ENCODE measurements at regions of chr19 and their contacts with region 1.

Region 1: DNA sequence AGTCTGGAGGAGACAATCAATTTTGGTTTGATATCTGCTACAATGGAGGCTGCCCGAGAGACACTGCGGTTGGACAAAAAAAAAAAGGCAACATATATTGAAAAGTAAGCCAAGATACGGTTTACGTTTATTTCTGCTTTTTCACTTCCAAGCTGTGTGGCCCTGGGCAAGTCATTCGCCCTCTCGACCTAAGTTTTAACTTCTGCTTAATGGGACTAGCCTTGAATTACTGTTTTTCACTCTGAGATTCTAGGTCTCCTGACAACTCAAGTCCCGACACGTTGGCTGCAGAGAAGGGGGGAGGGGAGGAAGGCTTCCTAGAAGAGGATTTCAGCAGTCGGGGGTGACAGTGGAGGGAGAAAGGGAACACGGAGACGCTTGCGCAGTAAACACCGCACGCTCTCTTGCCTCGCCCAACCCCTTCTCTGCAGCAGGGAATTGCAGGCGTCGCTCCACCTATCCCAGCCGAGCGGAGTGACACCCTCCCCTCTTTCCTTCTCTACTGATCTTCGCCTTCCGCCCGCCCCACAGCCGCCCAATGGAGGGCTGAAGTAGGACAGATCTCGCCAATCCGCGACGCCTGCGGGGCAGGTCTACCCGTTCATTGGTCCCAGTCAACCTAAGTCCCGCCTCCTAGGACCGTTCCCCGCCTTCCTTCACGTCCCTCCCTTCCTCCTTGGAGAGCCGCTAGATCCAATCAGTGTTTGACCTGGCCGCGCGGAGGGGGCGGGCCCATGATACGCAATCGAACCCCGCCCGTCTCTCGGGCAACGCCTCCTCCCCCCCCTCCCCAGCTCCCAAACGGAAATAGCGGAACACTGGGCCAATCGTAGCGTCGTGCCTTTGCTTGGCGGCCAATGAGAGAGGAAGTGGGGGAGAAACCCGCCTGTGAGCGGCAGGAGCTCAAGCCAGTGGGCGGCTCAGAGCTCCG is 529 bp upstream of the AP2A1 start:
- DNase-seq: peak; percentile 100
- ATAC-seq: peak; percentile 85
- H3K4me3 ChIP-seq: peak overlapping the region; percentile 49 to 78 (median 71)
- H3K4me3 Mint-ChIP-seq: peak overlapping the region; percentile 93
- H3K27ac ChIP-seq: peak overlapping the region; percentile 74 to 76
- H3K27ac Mint-ChIP-seq: peak overlapping the region; percentile 98
- H3K4me1 ChIP-seq: peaks cover 15 to 24% of the 10 kb centered on the region in 2 donors
- H3K4me1 Mint-ChIP-seq: peaks cover 35% of the 10 kb centered on the region
- H3K27me3 ChIP-seq: no peaks in the 10 kb centered on the region
- H3K27me3 Mint-ChIP-seq: no peaks in the 10 kb centered on the region
- CTCF ChIP-seq: no peak

Region 2: GRCh38 chr19:48795055-48795684 is 971.1 kb before region 1 on chr19:
- CTCF ChIA-PET with region 1: no interaction called
- POLR2A ChIA-PET with region 1: no interaction called
- intact Hi-C with region 1: loop called (anchors 2 kb)
- DNase-seq: peak; percentile 93
- ATAC-seq: peak; percentile 98
- H3K4me3 ChIP-seq: peak overlapping the region; percentile 42 to 68 (median 60)
- H3K4me3 Mint-ChIP-seq: peak overlapping the region; percentile 98
- H3K27ac ChIP-seq: peak overlapping the region; percentile 30 to 62
- H3K27ac Mint-ChIP-seq: peak overlapping the region; percentile 93
- H3K4me1 ChIP-seq: peaks cover 3 to 10% of the 10 kb centered on the region in 2 donors
- H3K4me1 Mint-ChIP-seq: peaks cover 11% of the 10 kb centered on the region
- H3K27me3 ChIP-seq: no peaks in the 10 kb centered on the region
- H3K27me3 Mint-ChIP-seq: no peaks in the 10 kb centered on the region
- CTCF ChIP-seq: peak; percentile 96

Region 3: GRCh38 chr19:49640113-49640898 is 126.0 kb before region 1 on chr19 and contains the start of gene RRAS:
- CTCF ChIA-PET with region 1: no interaction called
- POLR2A ChIA-PET with region 1: no interaction called
- intact Hi-C with region 1: loop called (anchors 1 kb)
- DNase-seq: peak; percentile 100
- ATAC-seq: peak; percentile 69
- H3K4me3 ChIP-seq: peak within 1 kb of the TSS; percentile 35 to 97 (median 80)
- H3K4me3 Mint-ChIP-seq: peak within 1 kb of the TSS; percentile 95
- H3K27ac ChIP-seq: peak within 1 kb of the TSS; percentile 91 to 96
- H3K27ac Mint-ChIP-seq: peak within 1 kb of the TSS; percentile 95
- H3K4me1 ChIP-seq: peaks cover 37 to 55% of the 10 kb centered on the region in 2 donors
- H3K4me1 Mint-ChIP-seq: peaks cover 53% of the 10 kb centered on the region
- H3K27me3 ChIP-seq: no peaks in the 10 kb centered on the region
- H3K27me3 Mint-ChIP-seq: no peaks in the 10 kb centered on the region
- CTCF ChIP-seq: no peak
- total RNA-seq, gene RRAS: 5.6 and 6.3 TPM in 2 replicates

Region 4: GRCh38 chr19:49808711-49809159 is 42.5 kb after region 1 on chr19:
- CTCF ChIA-PET with region 1: interaction called, 6 read pairs
- POLR2A ChIA-PET with region 1: interaction called, 12 read pairs
- intact Hi-C with region 1: loop called (anchors 1 kb)
- DNase-seq: peak; percentile 92
- ATAC-seq: peak; percentile 56
- H3K4me3 ChIP-seq: peak overlapping the region; percentile 28 to 87 (median 79)
- H3K4me3 Mint-ChIP-seq: peak overlapping the region; percentile 96
- H3K27ac ChIP-seq: peak overlapping the region; percentile 63 to 66
- H3K27ac Mint-ChIP-seq: peak overlapping the region; percentile 92
- H3K4me1 ChIP-seq: peaks cover 30 to 46% of the 10 kb centered on the region in 2 donors
- H3K4me1 Mint-ChIP-seq: peaks cover 49% of the 10 kb centered on the region
- H3K27me3 ChIP-seq: no peaks in the 10 kb centered on the region
- H3K27me3 Mint-ChIP-seq: no peaks in the 10 kb centered on the region
- CTCF ChIP-seq: no peak

Region 5: GRCh38 chr19:49850473-49851342 is 84.4 kb after region 1 on chr19 and contains the start of gene PTOV1:
- CTCF ChIA-PET with region 1: no interaction called
- POLR2A ChIA-PET with region 1: interaction called, 4 read pairs
- intact Hi-C with region 1: loop called (anchors 1 kb)
- DNase-seq: peak; percentile 93
- ATAC-seq: peak; percentile 82
- H3K4me3 ChIP-seq: peak within 1 kb of the TSS; percentile 73 to 95 (median 89)
- H3K4me3 Mint-ChIP-seq: peak within 1 kb of the TSS; percentile 93
- H3K27ac ChIP-seq: peak within 1 kb of the TSS; percentile 91 to 95
- H3K27ac Mint-ChIP-seq: peak within 1 kb of the TSS; percentile 98
- H3K4me1 ChIP-seq: peaks cover 30 to 49% of the 10 kb centered on the region in 2 donors
- H3K4me1 Mint-ChIP-seq: peaks cover 48% of the 10 kb centered on the region
- H3K27me3 ChIP-seq: no peaks in the 10 kb centered on the region
- H3K27me3 Mint-ChIP-seq: no peaks in the 10 kb centered on the region
- CTCF ChIP-seq: no peak
- total RNA-seq, gene PTOV1: 225 and 230 TPM in 2 replicates

Region 6: DNA sequence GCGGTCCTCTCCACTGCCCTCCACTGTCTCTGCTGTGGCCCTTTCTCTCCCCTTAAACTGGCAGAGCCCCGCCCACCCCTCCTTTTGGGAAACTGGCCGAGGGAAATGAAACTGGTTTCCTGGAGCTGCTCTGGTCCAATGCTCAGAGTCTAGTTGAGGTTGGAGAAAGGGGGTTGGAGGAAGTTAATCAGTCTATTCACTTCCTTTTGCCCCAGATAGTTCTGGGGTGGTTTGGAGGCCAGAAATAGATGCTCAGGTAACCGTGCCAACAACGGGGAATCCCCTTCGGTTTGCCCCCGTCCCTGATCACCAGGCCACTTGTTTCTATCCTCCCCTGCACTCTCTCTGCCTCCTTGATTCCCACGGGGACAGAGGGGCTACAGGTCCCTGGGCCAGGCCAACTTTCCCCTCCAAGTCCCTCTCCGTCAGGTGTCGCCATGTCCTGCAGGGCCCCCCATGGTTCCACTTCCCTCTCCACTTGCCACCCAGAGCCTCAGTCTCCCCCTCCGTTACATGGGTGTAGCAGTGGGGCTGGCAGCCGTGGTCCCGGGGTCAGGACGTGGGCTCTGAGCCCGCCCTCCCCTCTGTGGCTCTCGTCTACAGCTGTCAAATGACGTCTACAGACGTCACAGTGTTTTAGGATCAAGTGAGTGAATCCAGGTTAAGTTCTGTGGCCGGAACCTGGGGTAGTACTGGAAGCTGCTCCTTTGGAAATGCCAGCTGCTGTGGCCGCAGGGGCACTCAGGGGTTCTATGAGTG is 130.8 kb after region 1 on chr19 and contains the start of gene IL4I1:
- CTCF ChIA-PET with region 1: no interaction called
- POLR2A ChIA-PET with region 1: no interaction called
- intact Hi-C with region 1: loop called (anchors 1 kb)
- DNase-seq: peak; percentile 91
- ATAC-seq: peak; percentile 74
- H3K4me3 ChIP-seq: peak within 1 kb of the TSS; percentile 34 to 60 (median 44)
- H3K4me3 Mint-ChIP-seq: peak within 1 kb of the TSS; percentile 89
- H3K27ac ChIP-seq: peak within 1 kb of the TSS; percentile 82 to 84
- H3K27ac Mint-ChIP-seq: peak within 1 kb of the TSS; percentile 97
- H3K4me1 ChIP-seq: peaks cover 30 to 39% of the 10 kb centered on the region in 2 donors
- H3K4me1 Mint-ChIP-seq: peaks cover 40% of the 10 kb centered on the region
- H3K27me3 ChIP-seq: no peaks in the 10 kb centered on the region
- H3K27me3 Mint-ChIP-seq: no peaks in the 10 kb centered on the region
- CTCF ChIP-seq: no peak
- total RNA-seq, gene IL4I1: 3.1 and 3.9 TPM in 2 replicates

Region 7: DNA sequence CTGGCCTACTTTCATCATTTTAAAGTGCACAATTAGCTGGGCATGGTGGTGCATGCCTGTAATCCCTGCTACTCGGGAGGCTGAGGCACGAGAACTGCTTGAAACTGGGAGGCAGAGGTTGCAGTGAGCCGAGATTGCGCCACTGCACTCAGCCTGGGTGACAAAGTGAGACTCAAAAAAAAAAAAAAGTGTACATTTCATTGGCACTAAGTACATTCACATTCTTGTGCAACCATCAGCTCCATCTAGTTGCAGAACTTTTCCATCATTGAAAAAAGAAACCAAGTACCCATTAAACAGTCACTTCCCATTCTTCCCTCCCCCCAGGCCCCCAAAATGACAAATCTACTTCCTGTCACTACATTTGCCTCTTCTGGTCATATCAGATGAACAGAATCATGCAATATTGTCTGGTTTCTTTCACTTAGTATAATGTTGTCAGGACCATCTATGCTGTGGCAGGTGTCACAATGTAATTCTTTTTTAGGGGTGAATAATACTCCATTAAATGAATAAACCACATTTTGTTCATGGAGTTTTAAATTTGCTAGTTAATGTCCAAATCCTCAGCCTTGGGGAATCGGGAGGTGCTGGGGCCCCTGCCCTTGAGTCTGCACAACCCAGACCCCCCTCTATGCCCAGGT is 202.1 kb after region 1 on chr19:
- CTCF ChIA-PET with region 1: no interaction called
- POLR2A ChIA-PET with region 1: no interaction called
- intact Hi-C with region 1: no loop called
- DNase-seq: no peak
- ATAC-seq: no peak
- H3K4me3 ChIP-seq: no peak overlapping the region
- H3K4me3 Mint-ChIP-seq: no peak overlapping the region
- H3K27ac ChIP-seq: no peak overlapping the region
- H3K27ac Mint-ChIP-seq: no peak overlapping the region
- H3K4me1 ChIP-seq: no peaks in the 10 kb centered on the region
- H3K4me1 Mint-ChIP-seq: no peaks in the 10 kb centered on the region
- H3K27me3 ChIP-seq: peaks cover 0 to 10% (median 8%) of the 10 kb centered on the region in 4 experiments
- H3K27me3 Mint-ChIP-seq: peaks cover 5% of the 10 kb centered on the region
- CTCF ChIP-seq: no peak

Region 8: DNA sequence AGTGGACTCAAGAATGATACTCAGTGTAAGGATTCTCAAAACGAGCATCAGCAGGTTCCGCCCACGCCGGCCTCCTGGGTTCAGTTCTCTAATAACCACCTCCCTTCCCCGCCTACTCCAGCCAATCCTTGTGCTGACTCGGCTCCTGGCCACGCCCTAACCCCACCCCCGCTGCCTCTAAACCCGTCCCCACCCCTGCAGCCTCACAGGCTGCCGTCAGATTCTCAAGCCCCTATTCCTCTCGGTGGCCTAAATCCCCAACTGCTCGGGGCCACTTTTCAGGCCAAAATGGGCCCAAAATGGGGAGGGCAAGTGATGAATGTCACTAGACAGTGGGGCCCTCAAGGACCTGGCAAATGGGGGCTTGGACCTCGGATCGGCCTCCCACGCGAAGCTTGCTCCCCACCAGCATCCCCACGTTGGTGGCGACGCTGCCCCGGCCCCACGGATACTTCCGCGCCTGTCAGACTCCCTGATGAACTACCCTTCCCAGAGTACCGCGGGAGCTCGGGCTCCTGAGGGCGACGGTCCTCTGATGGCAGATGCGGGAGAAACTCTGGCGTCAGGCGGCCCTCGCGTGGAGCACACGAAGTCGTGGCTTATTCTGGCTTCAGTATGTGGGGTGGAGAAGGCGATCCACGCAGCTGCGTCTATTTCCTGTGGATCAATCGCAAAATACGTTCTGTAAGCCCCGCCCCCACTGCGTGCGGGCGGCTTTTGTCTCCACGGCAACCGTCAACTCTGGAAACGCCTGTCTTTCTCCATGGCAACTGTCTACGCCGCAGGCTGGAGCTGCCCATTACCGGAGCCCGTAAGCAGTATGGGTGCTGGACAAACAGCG is 284.3 kb after region 1 on chr19:
- CTCF ChIA-PET with region 1: no interaction called
- POLR2A ChIA-PET with region 1: no interaction called
- intact Hi-C with region 1: loop called (anchors 1 kb)
- DNase-seq: peak; percentile 87
- ATAC-seq: peak; percentile 94
- H3K4me3 ChIP-seq: peak overlapping the region; percentile 22 to 65 (median 54)
- H3K4me3 Mint-ChIP-seq: peak overlapping the region; percentile 94
- H3K27ac ChIP-seq: peak overlapping the region; percentile 46 to 51
- H3K27ac Mint-ChIP-seq: peak overlapping the region; percentile 62
- H3K4me1 ChIP-seq: peaks cover 5 to 17% of the 10 kb centered on the region in 2 donors
- H3K4me1 Mint-ChIP-seq: peaks cover 15% of the 10 kb centered on the region
- H3K27me3 ChIP-seq: peaks cover 0 to 6% (median 0%) of the 10 kb centered on the region in 4 experiments
- H3K27me3 Mint-ChIP-seq: peaks cover 9% of the 10 kb centered on the region
- CTCF ChIP-seq: no peak

Measured in B cell (primary cell).